Activated CD8-positive, alpha-beta memory T cell treated with anti-CD3 and anti-CD28 coated beads, Interleukin-2, amount 10 ng/mL, durations not matched to agents 7 days and 5 days (primary cell): ENCODE measurements at regions of chr13 and their contacts with region 1.

Region 1: DNA sequence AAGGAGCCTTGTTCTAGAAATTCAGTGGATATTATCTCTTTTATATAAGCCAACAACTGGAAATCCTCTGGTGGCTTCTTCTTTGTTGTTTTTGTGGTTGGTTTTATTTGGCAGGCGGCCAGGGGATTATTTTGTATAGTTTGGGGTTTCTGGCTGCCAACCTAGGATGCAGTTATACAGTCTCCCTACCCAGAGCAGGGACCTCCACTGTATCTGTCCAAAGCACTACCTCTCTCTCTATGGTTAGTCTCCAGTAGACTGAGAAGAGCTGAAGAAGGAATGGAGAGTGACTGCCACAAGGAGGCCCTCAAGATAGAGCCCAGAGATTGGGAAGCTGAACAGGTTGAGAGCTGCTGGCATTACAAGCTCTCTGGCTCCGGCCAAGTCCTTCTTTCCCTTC is 80.2 kb downstream of the ZAR1L start:
- DNase-seq: no peak
- ATAC-seq: no peak
- H3K4me3 Mint-ChIP-seq: no peak overlapping the region
- H3K27ac Mint-ChIP-seq: no peak overlapping the region
- H3K4me1 Mint-ChIP-seq: no peaks in the 10 kb centered on the region
- H3K27me3 Mint-ChIP-seq: no peaks in the 10 kb centered on the region

Region 2: DNA sequence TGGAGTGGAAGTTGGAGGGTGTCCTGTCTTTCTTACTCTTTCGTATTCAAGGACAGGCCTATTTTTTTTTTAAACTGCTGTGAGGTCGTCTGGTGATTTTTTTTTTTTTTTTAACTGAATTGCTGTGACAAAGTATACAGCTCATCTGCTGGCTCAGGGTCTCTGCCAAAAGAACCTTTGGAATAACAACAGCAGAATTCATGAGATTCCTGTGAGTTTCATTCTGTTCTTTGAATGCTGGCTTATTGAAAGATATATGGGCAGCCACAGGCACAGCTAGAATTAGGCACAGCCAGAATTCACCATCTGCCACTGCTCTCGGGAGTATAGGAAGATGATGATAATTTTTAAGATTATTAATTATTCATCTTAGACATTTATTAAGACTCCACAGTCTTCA is 224.8 kb before region 1 on chr13:
- CTCF ChIA-PET with region 1: no interaction called
- DNase-seq: no peak
- ATAC-seq: no peak
- H3K4me3 Mint-ChIP-seq: no peak overlapping the region
- H3K27ac Mint-ChIP-seq: no peak overlapping the region
- H3K4me1 Mint-ChIP-seq: no peaks in the 10 kb centered on the region
- H3K27me3 Mint-ChIP-seq: peaks cover 11% of the 10 kb centered on the region

Region 3: DNA sequence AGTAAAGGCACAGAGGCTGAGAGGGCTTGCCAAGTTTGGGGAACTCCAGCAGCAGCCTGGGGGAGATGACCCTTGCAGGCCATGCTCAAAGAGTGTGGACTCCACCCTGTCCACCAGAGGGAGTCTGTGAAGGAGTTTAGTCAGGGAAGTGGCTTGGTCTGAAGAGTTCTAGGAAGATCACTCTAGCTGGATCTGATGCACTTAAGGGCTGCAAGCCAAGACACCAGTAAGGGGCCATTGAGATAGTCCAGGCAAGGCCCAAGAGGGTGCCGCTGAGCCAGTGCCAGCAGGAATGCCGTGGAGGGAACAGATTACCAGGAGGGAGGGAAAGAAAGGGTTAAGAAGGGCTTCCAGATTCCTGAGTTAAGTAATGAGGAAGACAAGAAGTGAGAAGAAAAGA is 11.5 kb after region 1 on chr13:
- CTCF ChIA-PET with region 1: interaction called, 10 read pairs
- DNase-seq: peak; percentile 64
- ATAC-seq: peak; percentile 76
- H3K4me3 Mint-ChIP-seq: no peak overlapping the region
- H3K27ac Mint-ChIP-seq: no peak overlapping the region
- H3K4me1 Mint-ChIP-seq: peaks cover 10% of the 10 kb centered on the region
- H3K27me3 Mint-ChIP-seq: peaks cover 11% of the 10 kb centered on the region

Region 4: DNA sequence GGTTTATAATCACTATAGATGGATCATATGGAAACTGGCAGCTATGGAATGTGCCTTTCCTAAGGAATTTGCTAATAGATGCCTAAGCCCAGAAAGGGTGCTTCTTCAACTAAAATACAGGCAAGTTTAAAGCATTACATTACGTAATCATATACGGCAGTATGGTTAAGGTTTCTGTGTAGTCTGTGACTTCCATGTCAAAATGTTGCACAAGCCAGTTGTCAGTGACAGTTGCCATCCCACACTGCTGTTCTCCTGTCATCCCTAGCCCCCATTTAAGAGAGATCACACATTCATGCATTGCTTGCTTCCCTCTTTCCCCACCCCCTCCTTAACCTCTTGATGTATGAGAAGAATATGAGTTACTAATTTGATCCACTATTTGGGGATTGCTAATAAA is 127.6 kb after region 1 on chr13:
- CTCF ChIA-PET with region 1: no interaction called
- DNase-seq: no peak
- ATAC-seq: no peak
- H3K4me3 Mint-ChIP-seq: no peak overlapping the region
- H3K27ac Mint-ChIP-seq: no peak overlapping the region
- H3K4me1 Mint-ChIP-seq: no peaks in the 10 kb centered on the region
- H3K27me3 Mint-ChIP-seq: no peaks in the 10 kb centered on the region

Region 5: DNA sequence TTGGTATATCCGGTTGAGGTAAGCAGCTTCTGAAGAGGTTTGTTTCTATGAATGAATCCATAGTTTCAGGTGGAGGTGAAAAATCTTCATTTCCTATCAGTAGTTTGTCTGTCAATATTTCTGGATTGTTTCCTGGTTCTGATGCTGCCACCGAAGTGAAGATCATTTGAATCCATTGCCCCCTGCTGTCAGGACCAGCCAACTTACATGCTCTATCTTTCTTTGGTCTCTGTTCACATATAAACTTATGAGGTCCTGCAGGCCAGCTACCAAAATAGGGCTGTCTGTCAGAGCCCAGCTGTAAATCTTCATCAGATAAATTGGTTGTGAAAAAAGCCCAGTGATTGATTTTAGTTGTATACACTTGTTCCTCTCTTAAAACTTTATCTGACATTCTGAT is 208.2 kb after region 1 on chr13:
- CTCF ChIA-PET with region 1: no interaction called
- DNase-seq: peak; percentile 62
- ATAC-seq: peak; percentile 76
- H3K4me3 Mint-ChIP-seq: no peak overlapping the region
- H3K27ac Mint-ChIP-seq: no peak overlapping the region
- H3K4me1 Mint-ChIP-seq: peaks cover 7% of the 10 kb centered on the region
- H3K27me3 Mint-ChIP-seq: no peaks in the 10 kb centered on the region

Region 6: GRCh38 chr13:32955881-32956594 is 721.1 kb after region 1 on chr13:
- CTCF ChIA-PET with region 1: no interaction called
- DNase-seq: no peak
- ATAC-seq: no peak
- H3K4me3 Mint-ChIP-seq: no peak overlapping the region
- H3K27ac Mint-ChIP-seq: no peak overlapping the region
- H3K4me1 Mint-ChIP-seq: no peaks in the 10 kb centered on the region
- H3K27me3 Mint-ChIP-seq: peaks cover 18% of the 10 kb centered on the region